Heart right ventricle (tissue), 16 donors: ENCODE measurements at regions of chr7 and their contacts with region 1.

Region 1: GRCh38 chr7:112192236-112193154 is 13.7 kb downstream of the DOCK4 start:
- DNase-seq: peak in 1 of 2 donors; percentile 54
- ATAC-seq: peak; percentile 58 to 94 (median 79)
- H3K4me3 ChIP-seq: no peak overlapping the region
- H3K27ac ChIP-seq: peak overlapping the region in 6 of 10 donors; percentile 27 to 69 (median 42)
- H3K4me1 ChIP-seq: peaks cover 0 to 41% (median 13%) of the 10 kb centered on the region in 9 donors
- H3K27me3 ChIP-seq: no peaks in the 10 kb centered on the region
- CTCF ChIP-seq: no peak

Region 2: GRCh38 chr7:111914261-111914660 is 278.2 kb before region 1 on chr7:
- intact Hi-C with region 1: no loop called
- DNase-seq: no peak
- ATAC-seq: no peak
- H3K4me3 ChIP-seq: no peak overlapping the region
- H3K27ac ChIP-seq: no peak overlapping the region
- H3K4me1 ChIP-seq: peaks cover 0 to 19% (median 0%) of the 10 kb centered on the region in 9 donors
- H3K27me3 ChIP-seq: no peaks in the 10 kb centered on the region
- CTCF ChIP-seq: no peak

Region 3: GRCh38 chr7:111987115-111987826 is 205.2 kb before region 1 on chr7:
- intact Hi-C with region 1: loop called in 1 of 10 experiments (anchors 10 kb)
- DNase-seq: peak in 1 of 2 donors; percentile 40
- ATAC-seq: peak; percentile 62 to 87 (median 80)
- H3K4me3 ChIP-seq: peak overlapping the region in 1 of 10 donors; percentile 0
- H3K27ac ChIP-seq: peak overlapping the region in 9 of 10 donors; percentile 0 to 86 (median 63)
- H3K4me1 ChIP-seq: peaks cover 0 to 30% (median 10%) of the 10 kb centered on the region in 9 donors
- H3K27me3 ChIP-seq: no peaks in the 10 kb centered on the region
- CTCF ChIP-seq: no peak

Region 4: GRCh38 chr7:112049555-112050249 is 142.8 kb before region 1 on chr7:
- intact Hi-C with region 1: no loop called
- DNase-seq: no peak
- ATAC-seq: no peak
- H3K4me3 ChIP-seq: no peak overlapping the region
- H3K27ac ChIP-seq: no peak overlapping the region
- H3K4me1 ChIP-seq: peaks cover 0 to 32% (median 22%) of the 10 kb centered on the region in 9 donors
- H3K27me3 ChIP-seq: no peaks in the 10 kb centered on the region
- CTCF ChIP-seq: no peak

Region 5: DNA sequence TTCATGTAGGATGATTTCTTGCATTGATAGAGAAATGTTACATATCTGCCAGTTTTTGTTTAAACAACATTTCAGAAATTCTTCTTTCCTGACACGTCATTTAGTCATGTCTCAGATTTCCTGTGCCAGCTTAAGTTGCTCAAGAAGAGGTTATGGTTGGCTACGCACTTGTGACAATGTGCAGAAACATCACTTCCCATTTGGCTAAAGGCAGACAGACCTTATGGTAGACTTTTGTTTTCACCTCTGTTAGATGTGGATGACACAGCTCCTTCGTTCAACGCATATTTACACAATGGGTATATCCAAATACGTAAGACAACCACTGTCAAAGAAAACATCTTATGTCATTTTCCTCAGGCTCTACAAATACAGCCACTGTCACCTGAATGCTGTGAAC is 112.1 kb before region 1 on chr7:
- intact Hi-C with region 1: loop called in 2 of 10 experiments (anchors 10 kb)
- DNase-seq: no peak
- ATAC-seq: peak in 7 of 8 donors; percentile 37 to 78 (median 75)
- H3K4me3 ChIP-seq: peak overlapping the region in 2 of 10 donors; percentile 6 to 11
- H3K27ac ChIP-seq: peak overlapping the region in 6 of 10 donors; percentile 23 to 90 (median 57)
- H3K4me1 ChIP-seq: peaks cover 0 to 71% (median 37%) of the 10 kb centered on the region in 9 donors
- H3K27me3 ChIP-seq: no peaks in the 10 kb centered on the region
- CTCF ChIP-seq: no peak

Region 6: DNA sequence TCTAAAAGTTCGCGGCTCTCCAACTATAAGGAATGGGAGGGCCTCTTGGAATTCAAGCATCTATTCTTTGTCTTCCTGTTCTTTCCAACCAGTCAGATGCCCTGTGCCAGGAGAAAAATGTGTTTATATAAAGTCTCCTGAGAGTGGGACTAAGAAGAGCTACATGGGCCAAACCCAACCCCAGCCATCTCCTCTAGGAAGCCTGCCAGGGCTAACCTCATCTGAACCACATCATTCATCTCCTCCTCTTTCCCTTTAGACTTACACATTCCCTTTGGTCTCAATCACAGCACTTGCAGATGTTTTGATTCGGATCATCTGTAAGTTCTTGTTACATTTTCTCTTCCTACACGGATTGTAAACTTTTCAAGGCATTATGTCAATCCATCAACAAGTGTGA is 48.9 kb before region 1 on chr7:
- intact Hi-C with region 1: loop called in 1 of 10 experiments (anchors 2 kb)
- DNase-seq: no peak
- ATAC-seq: peak in 7 of 8 donors; percentile 30 to 78 (median 63)
- H3K4me3 ChIP-seq: no peak overlapping the region
- H3K27ac ChIP-seq: peak overlapping the region in 1 of 10 donors; percentile 37
- H3K4me1 ChIP-seq: peaks cover 8 to 56% (median 21%) of the 10 kb centered on the region in 9 donors
- H3K27me3 ChIP-seq: no peaks in the 10 kb centered on the region
- CTCF ChIP-seq: no peak